Activated CD4-positive, alpha-beta T cell treated with anti-CD3 and anti-CD28 coated beads for 36 hours (primary cell): ENCODE measurements at regions of chr10 and their contacts with region 1.

Region 1: GRCh38 chr10:93352638-93353383 is 129.3 kb downstream of the MYOF start:
- DNase-seq: no peak
- ATAC-seq: no peak
- H3K4me3 Mint-ChIP-seq: no peak overlapping the region
- H3K27ac Mint-ChIP-seq: no peak overlapping the region
- H3K4me1 Mint-ChIP-seq: peaks cover 3% of the 10 kb centered on the region
- H3K27me3 Mint-ChIP-seq: peaks cover 4% of the 10 kb centered on the region

Region 2: GRCh38 chr10:92880233-92880861 is 472.5 kb before region 1 on chr10:
- CTCF ChIA-PET with region 1: interaction called, 3 read pairs
- POLR2A ChIA-PET with region 1: no interaction called
- intact Hi-C with region 1: loop called (anchors 1 to 5 kb)
- DNase-seq: no peak
- ATAC-seq: no peak
- H3K4me3 Mint-ChIP-seq: no peak overlapping the region
- H3K27ac Mint-ChIP-seq: no peak overlapping the region
- H3K4me1 Mint-ChIP-seq: peaks cover 27% of the 10 kb centered on the region
- H3K27me3 Mint-ChIP-seq: no peaks in the 10 kb centered on the region

Region 3: GRCh38 chr10:92965314-92965713 is 387.5 kb before region 1 on chr10:
- CTCF ChIA-PET with region 1: interaction called, 8 read pairs
- POLR2A ChIA-PET with region 1: no interaction called
- intact Hi-C with region 1: loop called (anchors 1 to 2 kb)
- DNase-seq: no peak
- ATAC-seq: no peak
- H3K4me3 Mint-ChIP-seq: no peak overlapping the region
- H3K27ac Mint-ChIP-seq: no peak overlapping the region
- H3K4me1 Mint-ChIP-seq: no peaks in the 10 kb centered on the region
- H3K27me3 Mint-ChIP-seq: no peaks in the 10 kb centered on the region

Region 4: GRCh38 chr10:93115661-93116383 is 237.0 kb before region 1 on chr10:
- CTCF ChIA-PET with region 1: interaction called, 19 read pairs
- POLR2A ChIA-PET with region 1: no interaction called
- intact Hi-C with region 1: loop called (anchors 1 kb)
- DNase-seq: peak; percentile 85
- ATAC-seq: peak; percentile 83
- H3K4me3 Mint-ChIP-seq: no peak overlapping the region
- H3K27ac Mint-ChIP-seq: no peak overlapping the region
- H3K4me1 Mint-ChIP-seq: peaks cover 11% of the 10 kb centered on the region
- H3K27me3 Mint-ChIP-seq: peaks cover 5% of the 10 kb centered on the region

Region 5: DNA sequence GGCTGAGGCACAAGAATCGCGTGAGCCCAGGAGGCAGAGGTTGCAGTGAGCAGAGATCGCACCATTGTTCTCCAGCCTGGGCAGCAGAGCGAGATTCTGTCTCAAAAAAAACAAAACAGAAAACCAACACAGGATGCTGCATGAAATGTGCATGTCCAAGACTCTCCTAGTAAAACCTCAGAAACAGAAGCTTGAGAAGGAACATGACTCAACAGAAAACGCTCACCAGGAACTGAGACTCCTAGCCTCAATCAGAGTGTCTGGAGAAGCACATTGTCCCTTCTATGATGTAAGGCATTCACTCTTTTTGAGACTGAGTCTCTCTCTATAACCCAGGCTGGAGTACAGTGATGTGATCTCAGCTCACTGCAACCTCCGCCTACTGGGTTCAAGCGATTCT is 39.0 kb before region 1 on chr10:
- CTCF ChIA-PET with region 1: no interaction called
- POLR2A ChIA-PET with region 1: no interaction called
- intact Hi-C with region 1: no loop called
- DNase-seq: no peak
- ATAC-seq: no peak
- H3K4me3 Mint-ChIP-seq: no peak overlapping the region
- H3K27ac Mint-ChIP-seq: no peak overlapping the region
- H3K4me1 Mint-ChIP-seq: no peaks in the 10 kb centered on the region
- H3K27me3 Mint-ChIP-seq: no peaks in the 10 kb centered on the region

Region 6: DNA sequence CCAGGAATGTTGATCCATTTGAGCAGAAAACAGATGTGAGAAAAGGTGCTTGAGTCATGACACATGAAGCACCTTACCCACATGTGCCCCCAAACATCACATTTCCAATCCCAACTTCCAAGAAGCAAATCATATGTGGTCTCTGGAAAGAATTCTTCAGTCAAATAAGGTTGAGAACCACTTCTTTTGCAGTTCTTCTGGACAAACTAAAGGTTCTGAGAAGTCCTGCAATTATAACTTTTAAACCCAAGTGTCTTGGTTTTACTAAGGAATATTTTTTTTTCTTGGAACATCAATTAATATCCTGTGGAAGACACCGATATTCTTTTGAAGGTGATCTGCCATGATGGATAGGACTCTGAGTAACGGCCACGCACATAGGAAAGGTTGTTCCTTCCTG is 22.0 kb before region 1 on chr10:
- CTCF ChIA-PET with region 1: no interaction called
- POLR2A ChIA-PET with region 1: no interaction called
- intact Hi-C with region 1: no loop called
- DNase-seq: no peak
- ATAC-seq: no peak
- H3K4me3 Mint-ChIP-seq: no peak overlapping the region
- H3K27ac Mint-ChIP-seq: no peak overlapping the region
- H3K4me1 Mint-ChIP-seq: no peaks in the 10 kb centered on the region
- H3K27me3 Mint-ChIP-seq: peaks cover 3% of the 10 kb centered on the region

Region 7: DNA sequence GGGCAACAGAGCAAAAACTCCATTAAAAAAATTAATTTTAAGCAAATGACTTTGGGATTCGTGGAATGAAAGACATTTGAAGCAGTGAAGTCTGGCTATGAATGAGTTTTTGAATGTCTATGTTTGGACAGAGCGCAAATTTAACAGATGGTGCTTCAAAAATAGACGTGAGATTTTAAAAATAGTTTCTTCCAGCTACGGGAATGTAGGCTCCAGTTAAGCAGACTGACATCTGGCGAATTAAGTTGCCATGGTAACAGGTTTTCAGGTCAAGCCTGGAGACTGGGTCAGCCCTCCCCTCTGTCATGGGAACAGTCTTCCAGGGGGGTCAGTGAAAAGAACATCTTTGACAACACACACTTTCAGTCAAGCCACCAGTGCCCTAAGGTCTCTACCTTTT is 67.3 kb after region 1 on chr10:
- CTCF ChIA-PET with region 1: no interaction called
- POLR2A ChIA-PET with region 1: no interaction called
- intact Hi-C with region 1: no loop called
- DNase-seq: no peak
- ATAC-seq: no peak
- H3K4me3 Mint-ChIP-seq: no peak overlapping the region
- H3K27ac Mint-ChIP-seq: no peak overlapping the region
- H3K4me1 Mint-ChIP-seq: peaks cover 13% of the 10 kb centered on the region
- H3K27me3 Mint-ChIP-seq: no peaks in the 10 kb centered on the region

Region 8: DNA sequence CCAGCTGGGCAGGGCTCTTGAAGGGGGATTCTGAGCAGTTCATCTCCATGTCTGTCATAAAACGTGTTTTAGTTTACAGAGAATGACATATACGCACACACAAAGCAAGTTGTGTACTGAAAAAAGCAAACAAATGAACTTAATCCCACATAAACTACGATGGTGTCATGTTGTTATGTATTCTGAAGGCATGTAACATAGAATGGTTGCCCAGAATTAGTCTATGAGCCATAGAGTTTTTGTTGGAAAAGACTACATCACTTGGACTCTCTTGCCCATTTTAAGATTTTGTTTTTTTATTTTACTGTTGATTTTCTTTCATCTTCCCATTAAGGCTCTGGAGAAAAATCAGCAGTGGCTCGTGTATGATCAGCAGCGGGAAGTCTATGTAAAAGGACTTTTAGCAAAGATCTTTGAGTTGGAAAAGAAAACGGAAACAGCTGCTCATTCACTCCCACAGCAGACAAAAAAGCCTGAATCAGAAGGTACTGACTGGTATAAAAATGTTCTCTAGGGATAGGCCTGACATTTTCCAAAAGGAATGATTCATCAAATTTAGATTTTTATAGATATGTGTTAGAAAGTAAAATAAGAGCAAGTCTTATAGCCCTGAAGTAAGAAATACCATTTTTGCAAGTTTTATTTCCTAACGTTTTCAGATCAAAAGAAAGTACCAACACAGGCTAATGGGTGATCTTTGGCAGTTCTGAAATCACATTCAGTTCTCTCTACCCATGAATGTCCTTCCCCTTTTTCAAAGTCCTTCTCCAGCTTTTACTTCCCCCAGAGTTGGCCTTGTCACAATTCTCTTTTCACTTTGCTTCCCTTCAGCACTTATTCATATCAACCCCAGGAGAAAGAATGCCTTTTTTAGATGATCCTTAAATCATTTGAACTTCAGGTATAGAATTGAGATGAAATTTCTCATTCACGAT is 162.5 kb after region 1 on chr10:
- CTCF ChIA-PET with region 1: interaction called, 10 read pairs
- POLR2A ChIA-PET with region 1: no interaction called
- intact Hi-C with region 1: no loop called
- DNase-seq: no peak
- ATAC-seq: no peak
- H3K4me3 Mint-ChIP-seq: no peak overlapping the region
- H3K27ac Mint-ChIP-seq: no peak overlapping the region
- H3K4me1 Mint-ChIP-seq: peaks cover 5% of the 10 kb centered on the region
- H3K27me3 Mint-ChIP-seq: no peaks in the 10 kb centered on the region

Region 9: DNA sequence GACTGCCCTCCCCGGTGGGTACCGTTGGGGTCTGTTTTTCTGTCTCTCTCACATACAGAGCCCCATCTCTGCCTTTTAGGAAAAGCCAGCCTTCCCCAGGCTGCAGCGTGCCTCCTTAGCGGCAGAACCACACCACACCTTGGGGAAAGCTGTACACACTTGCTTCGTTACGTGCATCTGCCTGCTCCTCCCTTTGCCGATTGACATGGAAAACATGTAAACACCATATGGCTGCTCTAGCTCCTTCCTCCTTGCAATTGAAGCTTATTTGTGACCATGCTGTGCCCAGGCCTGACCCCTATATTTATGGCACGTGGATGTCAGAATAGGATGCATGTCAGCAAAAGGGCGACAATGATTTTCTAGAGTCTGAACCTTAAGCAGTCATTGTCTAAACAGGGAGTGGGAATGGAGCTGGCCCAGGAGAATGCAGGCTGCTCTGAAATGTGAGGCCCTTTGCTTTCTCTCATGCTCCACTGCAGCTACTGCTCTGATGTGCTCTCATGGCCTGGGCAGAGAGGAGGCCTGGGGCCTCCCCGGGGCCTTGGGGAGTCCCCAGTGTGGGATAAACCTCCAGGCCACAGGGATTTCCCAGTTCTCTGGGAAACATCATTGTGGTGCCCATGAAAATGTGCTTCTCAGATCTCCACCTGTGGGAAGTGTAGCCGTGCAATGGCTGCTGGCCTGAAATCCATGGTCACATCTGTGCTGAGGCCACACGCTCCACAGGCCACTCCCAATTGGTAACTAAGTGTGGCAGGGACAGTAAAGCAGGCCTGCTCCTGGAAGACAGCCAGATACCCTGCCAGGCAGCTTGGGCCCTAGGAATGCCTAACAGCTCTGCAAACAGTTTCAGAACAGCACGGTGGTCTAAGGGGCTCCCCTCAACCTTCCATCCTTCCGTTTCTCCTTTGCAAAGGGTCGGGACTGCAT is 278.1 kb after region 1 on chr10:
- CTCF ChIA-PET with region 1: no interaction called
- POLR2A ChIA-PET with region 1: no interaction called
- intact Hi-C with region 1: no loop called
- DNase-seq: no peak
- ATAC-seq: no peak
- H3K4me3 Mint-ChIP-seq: no peak overlapping the region
- H3K27ac Mint-ChIP-seq: no peak overlapping the region
- H3K4me1 Mint-ChIP-seq: no peaks in the 10 kb centered on the region
- H3K27me3 Mint-ChIP-seq: peaks cover 8% of the 10 kb centered on the region